ENCODE measurements at regions of chr7 and their contacts with region 1.

Region 1: GRCh38 chr7:50205011-50205410 is 99.5 kb upstream of the IKZF1 start:
- DNase-seq: no peak
- H3K4me3 Mint-ChIP-seq: no peak overlapping the region
- H3K27ac Mint-ChIP-seq: no peak overlapping the region
- H3K4me1 Mint-ChIP-seq: peaks cover 83% of the 10 kb centered on the region
- H3K27me3 Mint-ChIP-seq: no peaks in the 10 kb centered on the region

Region 2: DNA sequence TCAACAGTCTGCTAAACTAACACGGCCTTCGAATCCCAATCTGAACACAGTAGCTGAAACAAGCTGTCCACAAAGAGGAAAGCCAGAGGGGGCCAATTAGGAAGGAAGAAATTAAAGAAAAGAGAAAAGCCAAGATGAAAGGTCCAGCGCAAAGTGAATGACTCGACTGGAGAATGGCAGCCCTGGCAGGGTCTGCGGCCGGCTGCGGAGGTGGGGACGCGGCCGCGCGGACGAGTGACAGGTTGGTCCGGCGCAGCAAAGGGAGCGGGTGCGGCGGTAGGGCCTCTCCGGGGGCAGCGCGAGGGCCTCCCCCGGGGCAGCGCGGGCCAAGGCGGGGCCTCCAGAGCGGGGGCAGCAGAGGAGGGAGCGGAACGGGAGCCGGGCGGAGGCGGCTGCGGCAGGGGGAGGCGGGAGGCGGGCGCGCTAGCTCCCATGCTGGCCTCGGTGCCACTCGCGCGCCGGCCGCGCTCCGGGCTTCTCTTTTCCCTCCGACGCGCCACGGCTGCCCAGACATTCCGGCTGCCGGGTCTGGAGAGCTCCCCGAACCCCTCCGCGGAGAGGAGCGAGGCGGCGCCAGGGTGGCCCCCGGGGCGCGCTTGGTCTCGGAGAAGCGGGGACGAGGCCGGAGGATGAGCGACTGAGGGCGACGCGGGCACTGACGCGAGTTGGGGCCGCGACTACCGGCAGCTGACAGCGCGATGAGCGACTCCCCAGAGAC is 431.6 kb before region 1 on chr7 and contains the start of gene VWC2:
- intact Hi-C with region 1: no loop called
- DNase-seq: no peak
- H3K4me3 Mint-ChIP-seq: no peak within 1 kb of the TSS
- H3K27ac Mint-ChIP-seq: no peak within 1 kb of the TSS
- H3K4me1 Mint-ChIP-seq: peaks cover 4% of the 10 kb centered on the region
- H3K27me3 Mint-ChIP-seq: peaks cover 58% of the 10 kb centered on the region
- total RNA-seq, gene VWC2: not detected in 2 replicates

Region 3: DNA sequence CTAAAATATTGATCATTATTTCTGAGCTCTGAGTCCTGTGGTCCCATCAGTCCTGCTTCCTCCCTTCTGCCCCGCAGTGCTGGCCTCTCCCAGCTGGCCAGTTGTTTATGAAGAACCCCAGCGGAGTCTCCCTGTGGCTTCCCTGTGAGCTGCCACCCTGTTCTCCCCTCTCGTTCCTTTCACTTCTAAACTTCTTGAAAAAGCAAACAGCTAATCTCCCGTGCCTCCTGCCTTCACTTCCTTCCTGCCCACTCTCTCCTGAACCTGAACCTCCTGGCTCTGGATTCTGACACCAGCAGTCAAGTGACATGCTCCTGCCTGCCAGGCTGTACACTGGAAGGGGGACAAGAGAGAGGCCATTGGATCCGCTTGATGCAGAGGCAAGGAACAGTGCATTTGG is 48.3 kb before region 1 on chr7:
- intact Hi-C with region 1: loop called (anchors 2 kb)
- DNase-seq: no peak
- H3K4me3 Mint-ChIP-seq: peak overlapping the region; percentile 66
- H3K27ac Mint-ChIP-seq: peak overlapping the region; percentile 87
- H3K4me1 Mint-ChIP-seq: peaks cover 65% of the 10 kb centered on the region
- H3K27me3 Mint-ChIP-seq: no peaks in the 10 kb centered on the region

Region 4: DNA sequence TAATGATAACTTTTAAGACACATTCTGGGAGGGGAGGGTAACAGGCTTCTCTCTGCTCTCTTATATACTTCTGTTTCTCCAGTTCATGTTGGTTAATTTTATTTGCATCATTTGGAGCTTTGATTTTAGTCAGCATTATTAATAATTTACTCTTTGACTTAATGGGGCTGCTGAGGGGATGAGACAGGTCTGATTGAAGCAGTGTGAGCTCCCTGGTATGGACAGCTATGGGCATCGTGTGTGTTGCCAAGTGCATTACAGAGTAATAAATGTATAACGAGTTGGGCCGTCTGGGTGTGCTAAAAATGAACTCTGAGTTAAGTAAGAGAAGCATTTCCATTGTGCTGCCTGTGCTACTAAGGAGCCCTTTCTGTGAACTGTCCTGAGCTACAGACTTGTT is 67.8 kb after region 1 on chr7:
- intact Hi-C with region 1: no loop called
- DNase-seq: no peak
- H3K4me3 Mint-ChIP-seq: no peak overlapping the region
- H3K27ac Mint-ChIP-seq: no peak overlapping the region
- H3K4me1 Mint-ChIP-seq: peaks cover 56% of the 10 kb centered on the region
- H3K27me3 Mint-ChIP-seq: no peaks in the 10 kb centered on the region

Measured in activated T-helper 2 cell treated with anti-CD3 and anti-CD28 coated beads, Interferon-gamma antibody, Interleukin-2, Interleukin-4, amounts not matched to agents 10 μg/mL and 5 μg/mL and 100 μg/mL, durations not matched to agents 14 hours and 24 hours and 36 hours (primary cell).